HepG2 (cell line): ENCODE measurements at regions of chr1 and their contacts with region 1.

Region 1: DNA sequence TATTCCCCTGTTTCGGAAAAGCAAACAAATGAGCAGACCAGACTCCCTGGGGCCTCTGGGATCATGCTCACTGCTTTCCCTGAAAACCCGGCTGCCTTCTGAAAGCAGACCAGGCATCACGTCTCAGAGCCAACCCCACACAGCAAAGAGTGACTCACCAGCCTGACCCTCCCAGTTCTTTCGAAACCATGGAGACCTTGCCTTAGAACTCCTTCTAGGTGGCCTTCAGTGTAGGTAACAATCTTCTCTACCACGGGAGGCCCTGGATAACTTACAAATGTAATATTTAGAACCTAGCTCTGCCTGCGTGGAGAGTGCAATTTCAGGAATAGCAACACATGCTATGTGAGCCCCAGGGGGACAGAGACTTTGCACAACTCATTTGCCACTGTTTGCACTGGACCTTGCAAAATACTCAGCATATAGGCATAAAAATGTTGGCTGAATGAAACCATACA is 105.2 kb downstream of the SUSD4 start:
- DNase-seq: peak; percentile 10
- ATAC-seq: peak; percentile 71
- H3K4me3 ChIP-seq: no peak overlapping the region
- H3K27ac ChIP-seq: no peak overlapping the region
- H3K4me1 ChIP-seq: no peaks in the 10 kb centered on the region
- H3K27me3 ChIP-seq: peaks cover 0 to 26% of the 10 kb centered on the region in 2 experiments; a peak in 3 of 5 replicates
- CTCF ChIP-seq: no peak
- EP300 ChIP-seq: no peak
- POLR2A ChIP-seq: no peak
- RAD21 ChIP-seq: no peak

Region 2: GRCh38 chr1:223142795-223143536 is 115.8 kb before region 1 on chr1 and contains the start of gene TLR5:
- CTCF ChIA-PET with region 1: no interaction called
- POLR2A ChIA-PET with region 1: no interaction called
- in situ Hi-C with region 1: no loop called
- intact Hi-C with region 1: loop called (anchors 10 kb)
- DNase-seq: no peak
- ATAC-seq: peak; percentile 61
- H3K4me3 ChIP-seq: peak within 1 kb of the TSS in 1 of 3 experiments; percentile 4; a peak in 1 of 6 replicates
- H3K27ac ChIP-seq: no peak within 1 kb of the TSS
- H3K4me1 ChIP-seq: no peaks in the 10 kb centered on the region
- H3K27me3 ChIP-seq: peaks cover 0 to 3% of the 10 kb centered on the region in 2 experiments; a peak in 1 of 5 replicates
- CTCF ChIP-seq: no peak
- EP300 ChIP-seq: no peak
- POLR2A ChIP-seq: no peak
- RAD21 ChIP-seq: no peak
- total RNA-seq, gene TLR5: not detected in 2 replicates